ENCODE measurements at regions of chr4 and their contacts with region 1.

Region 1: GRCh38 chr4:163494360-163495162 is at the start of gene TMA16:
- DNase-seq: peak; percentile 77
- ATAC-seq: peak; percentile 86
- H3K4me3 ChIP-seq: peak within 1 kb of the TSS; percentile 85
- H3K27ac ChIP-seq: peak within 1 kb of the TSS; percentile 97
- H3K4me1 ChIP-seq: peaks cover 5% of the 10 kb centered on the region; the same call in 1 of the 2 replicates
- H3K27me3 ChIP-seq: no peaks in the 10 kb centered on the region
- CTCF ChIP-seq: no peak
- EP300 ChIP-seq: peak in 1 of 2 experiments; percentile 27; a peak in 1 of 4 replicates
- POLR2A ChIP-seq: peak; percentile 90
- RAD21 ChIP-seq: no peak
- polyA plus RNA-seq, gene TMA16: 65.4 to 91.0 TPM

Region 2: DNA sequence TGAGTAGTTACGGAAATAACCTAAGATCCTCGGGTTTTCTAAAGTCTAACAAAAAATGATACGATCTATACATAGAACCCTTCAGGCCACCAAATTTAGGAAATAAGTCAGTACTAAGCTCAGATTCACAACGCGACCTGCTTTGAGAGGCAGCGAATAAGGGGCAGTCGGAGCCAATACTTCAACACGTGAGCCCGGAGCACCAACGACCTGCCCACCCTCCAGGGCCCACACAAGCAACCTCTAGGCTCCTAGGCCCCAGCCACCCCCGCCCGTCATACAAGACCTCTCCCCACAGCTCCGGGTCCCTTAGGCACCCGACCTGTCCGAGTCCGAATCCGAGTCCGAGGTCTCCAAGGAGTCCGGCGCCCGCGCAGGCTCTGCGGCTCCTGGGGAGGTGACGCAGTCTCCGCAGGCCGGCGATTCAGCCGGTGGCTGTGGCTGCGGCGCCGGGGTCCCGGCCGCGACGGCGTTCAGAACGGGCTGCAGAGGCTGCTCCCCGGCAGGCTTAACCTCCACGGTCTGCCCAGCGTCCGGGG is 328.5 kb before region 1 on chr4:
- CTCF ChIA-PET with region 1: interaction called, 3 read pairs
- POLR2A ChIA-PET with region 1: no interaction called
- RAD21 ChIA-PET with region 1: no interaction called
- SMC1A ChIA-PET with region 1: no interaction called
- in situ Hi-C with region 1: loop called (anchors 10 kb)
- intact Hi-C with region 1: loop called (anchors 2 kb)
- DNase-seq: no peak
- ATAC-seq: peak; percentile 81
- H3K4me3 ChIP-seq: peak overlapping the region; percentile 81
- H3K27ac ChIP-seq: peak overlapping the region; percentile 71
- H3K4me1 ChIP-seq: 0 out of 2 replicates have a peak, but pooled peaks cover 3% of the 10 kb centered on the region
- H3K27me3 ChIP-seq: no peaks in the 10 kb centered on the region
- CTCF ChIP-seq: no peak
- EP300 ChIP-seq: no peak
- POLR2A ChIP-seq: peak; percentile 7
- RAD21 ChIP-seq: no peak

Region 3: DNA sequence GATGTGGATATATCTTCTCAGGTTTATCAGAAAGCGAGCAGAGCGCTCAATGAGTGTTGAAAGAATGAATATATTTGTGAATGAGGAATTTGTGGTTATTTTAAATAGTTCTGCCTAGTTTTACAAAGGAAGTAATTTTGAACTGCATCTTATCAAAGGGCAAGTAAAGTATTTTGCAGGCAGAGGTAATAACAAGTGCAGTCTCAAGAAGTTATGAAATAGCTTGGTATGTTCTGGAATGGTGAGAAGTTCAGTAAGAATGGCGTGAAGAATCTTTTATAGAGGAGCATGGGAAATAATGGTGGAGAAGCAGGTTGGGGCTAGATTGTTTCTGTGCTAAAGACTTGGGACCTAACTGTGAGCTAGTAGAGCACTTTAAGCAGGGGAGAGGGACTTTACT is 10.8 kb after region 1 on chr4:
- CTCF ChIA-PET with region 1: interaction called, 13 read pairs
- POLR2A ChIA-PET with region 1: interaction called, 6 read pairs
- RAD21 ChIA-PET with region 1: interaction called, 4 read pairs
- SMC1A ChIA-PET with region 1: interaction called, 19 read pairs
- in situ Hi-C with region 1: no loop called
- intact Hi-C with region 1: no loop called
- DNase-seq: no peak
- ATAC-seq: peak; percentile 11; the same call in 2 of the 3 replicates
- H3K4me3 ChIP-seq: no peak overlapping the region
- H3K27ac ChIP-seq: no peak overlapping the region
- H3K4me1 ChIP-seq: peaks cover 10% of the 10 kb centered on the region
- H3K27me3 ChIP-seq: no peaks in the 10 kb centered on the region
- CTCF ChIP-seq: no peak
- EP300 ChIP-seq: no peak
- POLR2A ChIP-seq: no peak
- RAD21 ChIP-seq: no peak

Region 4: GRCh38 chr4:163587867-163588266 is 93.3 kb after region 1 on chr4:
- CTCF ChIA-PET with region 1: interaction called, 3 read pairs
- POLR2A ChIA-PET with region 1: interaction called, 5 read pairs
- RAD21 ChIA-PET with region 1: no interaction called
- SMC1A ChIA-PET with region 1: interaction called, 5 read pairs
- in situ Hi-C with region 1: no loop called
- intact Hi-C with region 1: loop called (anchors 5 kb)
- DNase-seq: peak; percentile 73
- ATAC-seq: peak; percentile 78
- H3K4me3 ChIP-seq: no peak overlapping the region
- H3K27ac ChIP-seq: peak overlapping the region; percentile 25; the same call in 1 of the 2 replicates
- H3K4me1 ChIP-seq: peaks cover 33% of the 10 kb centered on the region
- H3K27me3 ChIP-seq: no peaks in the 10 kb centered on the region
- CTCF ChIP-seq: peak; percentile 28 to 62 (median 46); a peak in 5 of 6 replicates
- EP300 ChIP-seq: peak; percentile 63 to 78; a peak in 3 of 4 replicates
- POLR2A ChIP-seq: no peak
- RAD21 ChIP-seq: peak; percentile 20; the same call in 1 of the 2 replicates

Region 5: DNA sequence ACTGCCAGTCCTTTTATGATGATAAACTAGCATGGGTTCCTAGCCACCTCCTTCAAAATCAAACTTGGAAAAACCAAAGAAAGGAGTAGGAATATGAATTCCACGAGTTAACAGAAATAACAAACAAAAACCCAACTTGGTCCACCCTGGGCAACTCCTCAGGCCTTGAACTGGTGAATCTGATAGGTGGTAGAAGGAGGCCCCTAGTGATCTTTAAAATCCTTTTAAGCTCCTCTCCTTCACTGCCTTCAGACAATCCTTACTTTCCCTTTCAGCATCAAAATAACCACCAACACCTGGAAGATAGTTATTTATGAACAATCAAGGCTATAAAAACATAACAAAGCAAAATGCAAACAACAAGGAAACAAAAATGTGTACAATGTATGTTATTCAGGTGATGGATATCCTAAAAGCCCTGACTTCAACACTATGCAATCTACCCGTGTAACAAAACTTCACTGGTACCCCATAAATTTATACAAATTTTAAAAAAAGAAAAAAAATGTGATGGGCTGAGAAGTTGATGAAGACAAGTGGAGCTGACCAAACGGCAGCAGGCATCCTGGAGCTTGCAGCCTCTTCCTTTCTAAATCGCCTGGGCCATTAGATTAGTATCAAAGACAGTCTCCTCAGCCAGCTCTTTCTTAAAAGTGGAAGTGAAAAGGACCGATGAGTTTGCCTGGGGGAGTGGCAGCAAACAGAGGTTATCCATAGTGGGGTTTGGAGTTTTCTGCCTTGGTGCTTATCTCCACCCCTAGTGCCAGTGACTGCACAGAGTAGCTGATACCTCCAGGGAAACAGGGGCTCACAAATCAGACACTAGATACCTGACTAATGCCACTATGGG is 179.5 kb after region 1 on chr4:
- CTCF ChIA-PET with region 1: interaction called, 3 read pairs
- POLR2A ChIA-PET with region 1: no interaction called
- RAD21 ChIA-PET with region 1: no interaction called
- SMC1A ChIA-PET with region 1: interaction called, 3 read pairs
- in situ Hi-C with region 1: no loop called
- intact Hi-C with region 1: loop called (anchors 5 kb)
- DNase-seq: no peak
- ATAC-seq: peak; percentile 90
- H3K4me3 ChIP-seq: no peak overlapping the region; the same call in 1 of the 2 replicates
- H3K27ac ChIP-seq: no peak overlapping the region
- H3K4me1 ChIP-seq: no peaks in the 10 kb centered on the region; the same call in 1 of the 2 replicates
- H3K27me3 ChIP-seq: no peaks in the 10 kb centered on the region
- CTCF ChIP-seq: no peak
- EP300 ChIP-seq: no peak
- POLR2A ChIP-seq: no peak
- RAD21 ChIP-seq: no peak

Region 6: GRCh38 chr4:163688856-163689255 is 194.3 kb after region 1 on chr4:
- CTCF ChIA-PET with region 1: no interaction called
- POLR2A ChIA-PET with region 1: no interaction called
- RAD21 ChIA-PET with region 1: no interaction called
- SMC1A ChIA-PET with region 1: no interaction called
- in situ Hi-C with region 1: no loop called
- intact Hi-C with region 1: no loop called
- DNase-seq: no peak
- ATAC-seq: no peak
- H3K4me3 ChIP-seq: no peak overlapping the region
- H3K27ac ChIP-seq: no peak overlapping the region
- H3K4me1 ChIP-seq: no peaks in the 10 kb centered on the region
- H3K27me3 ChIP-seq: no peaks in the 10 kb centered on the region
- CTCF ChIP-seq: no peak
- EP300 ChIP-seq: no peak
- POLR2A ChIP-seq: no peak
- RAD21 ChIP-seq: no peak

Region 7: DNA sequence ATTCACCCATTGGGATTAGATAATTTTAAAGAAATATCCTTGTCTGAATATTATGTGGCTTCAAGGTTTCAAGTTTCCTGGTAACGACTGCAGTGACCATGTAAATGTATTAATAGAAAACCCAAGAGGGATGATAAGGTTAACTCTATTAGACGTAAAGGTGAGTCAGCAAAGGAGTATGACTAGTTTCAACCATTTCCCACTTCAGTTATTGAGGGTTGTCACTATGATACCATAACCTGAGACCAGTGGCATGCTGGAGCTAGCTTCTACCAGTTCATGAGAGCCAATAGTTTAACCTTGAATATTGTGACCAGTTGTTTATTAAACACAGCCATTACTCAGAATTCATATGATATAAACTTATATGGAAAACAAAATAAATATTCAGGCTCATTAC is 270.0 kb after region 1 on chr4:
- CTCF ChIA-PET with region 1: no interaction called
- POLR2A ChIA-PET with region 1: no interaction called
- RAD21 ChIA-PET with region 1: no interaction called
- SMC1A ChIA-PET with region 1: no interaction called
- in situ Hi-C with region 1: no loop called
- intact Hi-C with region 1: no loop called
- DNase-seq: no peak
- ATAC-seq: no peak
- H3K4me3 ChIP-seq: no peak overlapping the region
- H3K27ac ChIP-seq: no peak overlapping the region
- H3K4me1 ChIP-seq: no peaks in the 10 kb centered on the region
- H3K27me3 ChIP-seq: no peaks in the 10 kb centered on the region
- CTCF ChIP-seq: no peak
- EP300 ChIP-seq: no peak
- POLR2A ChIP-seq: no peak
- RAD21 ChIP-seq: no peak

Region 8: GRCh38 chr4:163815776-163816175 is 321.2 kb after region 1 on chr4:
- CTCF ChIA-PET with region 1: no interaction called
- POLR2A ChIA-PET with region 1: no interaction called
- RAD21 ChIA-PET with region 1: no interaction called
- SMC1A ChIA-PET with region 1: no interaction called
- in situ Hi-C with region 1: no loop called
- intact Hi-C with region 1: loop called (anchors 10 kb)
- DNase-seq: no peak
- ATAC-seq: peak; percentile 66
- H3K4me3 ChIP-seq: no peak overlapping the region
- H3K27ac ChIP-seq: no peak overlapping the region
- H3K4me1 ChIP-seq: peaks cover 3% of the 10 kb centered on the region; the same call in 1 of the 2 replicates
- H3K27me3 ChIP-seq: no peaks in the 10 kb centered on the region
- CTCF ChIP-seq: no peak
- EP300 ChIP-seq: peak in 1 of 2 experiments; percentile 57; a peak in 2 of 4 replicates
- POLR2A ChIP-seq: no peak
- RAD21 ChIP-seq: no peak

Region 9: DNA sequence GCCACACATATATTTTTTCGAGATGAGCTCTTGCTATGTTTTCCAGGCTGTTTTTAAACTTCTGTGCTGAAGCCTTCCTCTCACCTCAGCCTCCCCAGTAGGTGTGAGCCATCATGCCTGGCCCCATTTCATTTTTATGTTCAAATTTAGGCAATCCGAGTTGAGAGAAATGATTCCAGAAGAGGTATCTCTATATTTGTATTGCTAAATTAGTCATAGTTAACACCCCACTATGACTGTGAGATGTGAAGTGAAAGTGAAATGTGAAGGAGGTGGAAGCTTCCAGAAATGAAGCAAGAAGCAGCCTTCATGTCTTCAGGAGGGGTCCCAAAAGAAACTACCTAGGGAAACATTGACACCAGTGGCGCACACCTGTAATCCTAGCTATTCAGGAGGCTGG is 1400.1 kb after region 1 on chr4:
- CTCF ChIA-PET with region 1: no interaction called
- POLR2A ChIA-PET with region 1: no interaction called
- RAD21 ChIA-PET with region 1: no interaction called
- SMC1A ChIA-PET with region 1: no interaction called
- in situ Hi-C with region 1: no loop called
- intact Hi-C with region 1: loop called (anchors 10 kb)
- DNase-seq: peak; percentile 48
- ATAC-seq: peak; percentile 82
- H3K4me3 ChIP-seq: no peak overlapping the region
- H3K27ac ChIP-seq: no peak overlapping the region
- H3K4me1 ChIP-seq: peaks cover 24% of the 10 kb centered on the region
- H3K27me3 ChIP-seq: no peaks in the 10 kb centered on the region
- CTCF ChIP-seq: no peak
- EP300 ChIP-seq: 0 out of 4 replicates have a peak, but pooled peaks of 1 of the 2 experiments have one; percentile 38
- POLR2A ChIP-seq: no peak
- RAD21 ChIP-seq: no peak

Measured in GM12878 (cell line).